Activated naive CD4-positive, alpha-beta T cell treated with anti-CD3 and anti-CD28 coated beads, Interleukin-2, amount 10 ng/mL, durations not matched to agents 7 days and 5 days (primary cell): ENCODE measurements at regions of chr10 and their contacts with region 1.

Region 1: GRCh38 chr10:62610649-62611229 is 193.8 kb upstream of the ADO start:
- DNase-seq: peak; percentile 79
- H3K4me3 Mint-ChIP-seq: no peak overlapping the region
- H3K27ac Mint-ChIP-seq: no peak overlapping the region
- H3K4me1 Mint-ChIP-seq: no peaks in the 10 kb centered on the region
- H3K27me3 Mint-ChIP-seq: peaks cover 15% of the 10 kb centered on the region

Region 2: DNA sequence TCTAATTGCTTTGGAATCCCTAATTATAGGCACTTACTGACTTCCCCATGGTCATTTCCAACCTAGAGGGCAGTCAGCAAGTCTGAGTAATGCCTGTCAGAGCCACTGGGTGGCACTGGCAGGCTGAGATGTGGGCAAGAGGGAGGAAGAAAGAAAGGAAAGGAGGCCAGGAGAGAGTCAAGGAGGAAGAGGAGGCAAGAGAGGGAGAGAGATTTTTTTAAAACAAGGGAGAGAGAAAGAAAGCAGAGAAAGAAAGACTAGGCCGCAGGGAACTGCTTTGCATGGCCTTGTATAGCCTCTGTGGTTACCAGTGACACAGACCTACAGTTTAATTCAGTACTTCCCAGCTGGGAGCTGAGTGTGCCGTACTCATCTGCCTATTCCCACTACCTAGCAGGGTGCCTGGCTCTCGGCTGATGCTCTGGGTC is 16.6 kb before region 1 on chr10:
- CTCF ChIA-PET with region 1: interaction called, 10 read pairs
- DNase-seq: peak; percentile 64
- H3K4me3 Mint-ChIP-seq: no peak overlapping the region
- H3K27ac Mint-ChIP-seq: no peak overlapping the region
- H3K4me1 Mint-ChIP-seq: no peaks in the 10 kb centered on the region
- H3K27me3 Mint-ChIP-seq: peaks cover 8% of the 10 kb centered on the region

Region 3: DNA sequence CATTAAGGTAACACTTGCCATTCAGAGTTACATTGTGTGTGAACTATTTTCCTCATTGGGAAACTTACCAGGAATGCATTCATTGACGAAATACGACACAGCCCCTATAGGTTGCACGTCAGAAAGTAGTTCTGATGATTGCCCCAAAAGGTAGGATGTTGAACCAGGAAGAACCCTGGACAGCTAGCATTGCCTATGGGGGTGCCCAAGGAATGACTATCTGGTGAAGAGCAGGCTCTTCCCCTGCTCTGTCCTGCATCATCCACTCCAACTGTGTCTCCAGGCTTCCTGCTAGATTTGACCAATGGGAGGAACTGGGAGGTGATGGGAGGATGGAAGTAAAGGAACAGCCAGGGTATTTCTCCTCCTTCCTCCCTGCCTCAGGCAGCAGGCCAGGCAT is 11.2 kb after region 1 on chr10:
- CTCF ChIA-PET with region 1: interaction called, 11 read pairs
- DNase-seq: no peak
- H3K4me3 Mint-ChIP-seq: no peak overlapping the region
- H3K27ac Mint-ChIP-seq: no peak overlapping the region
- H3K4me1 Mint-ChIP-seq: peaks cover 10% of the 10 kb centered on the region
- H3K27me3 Mint-ChIP-seq: peaks cover 22% of the 10 kb centered on the region

Region 4: DNA sequence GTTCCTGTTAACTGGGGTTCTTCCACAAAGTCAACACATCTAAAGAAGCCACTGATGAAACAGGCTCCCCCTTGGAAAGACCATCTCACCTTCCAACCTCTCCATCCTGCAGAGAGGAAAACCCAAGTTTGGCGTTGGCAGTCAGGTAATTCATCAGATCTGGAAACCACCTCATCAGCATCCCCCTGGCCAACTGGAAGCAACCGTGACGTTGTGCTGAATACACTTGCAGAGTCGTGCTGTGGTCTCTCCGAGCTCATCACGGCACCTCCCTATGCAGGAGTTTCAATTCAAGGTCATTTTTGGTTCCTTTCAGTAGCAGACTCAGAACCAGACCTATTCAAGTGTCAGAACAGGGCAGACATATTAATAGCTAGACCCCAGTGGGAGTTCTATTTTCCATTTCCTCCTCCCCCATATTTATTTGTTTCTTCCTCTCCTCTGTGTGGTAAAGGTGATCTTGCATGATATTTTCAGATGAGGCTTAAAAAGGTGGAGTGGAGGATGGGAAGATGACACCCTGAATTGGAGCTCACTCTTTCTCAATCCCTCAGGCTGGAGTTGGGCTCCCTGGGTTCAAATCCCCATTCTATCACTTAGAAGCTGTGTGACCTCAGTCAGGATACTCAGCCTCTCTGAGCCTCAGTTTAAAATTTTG is 44.7 kb after region 1 on chr10:
- CTCF ChIA-PET with region 1: no interaction called
- DNase-seq: no peak
- H3K4me3 Mint-ChIP-seq: no peak overlapping the region
- H3K27ac Mint-ChIP-seq: no peak overlapping the region
- H3K4me1 Mint-ChIP-seq: no peaks in the 10 kb centered on the region
- H3K27me3 Mint-ChIP-seq: peaks cover 8% of the 10 kb centered on the region

Region 5: DNA sequence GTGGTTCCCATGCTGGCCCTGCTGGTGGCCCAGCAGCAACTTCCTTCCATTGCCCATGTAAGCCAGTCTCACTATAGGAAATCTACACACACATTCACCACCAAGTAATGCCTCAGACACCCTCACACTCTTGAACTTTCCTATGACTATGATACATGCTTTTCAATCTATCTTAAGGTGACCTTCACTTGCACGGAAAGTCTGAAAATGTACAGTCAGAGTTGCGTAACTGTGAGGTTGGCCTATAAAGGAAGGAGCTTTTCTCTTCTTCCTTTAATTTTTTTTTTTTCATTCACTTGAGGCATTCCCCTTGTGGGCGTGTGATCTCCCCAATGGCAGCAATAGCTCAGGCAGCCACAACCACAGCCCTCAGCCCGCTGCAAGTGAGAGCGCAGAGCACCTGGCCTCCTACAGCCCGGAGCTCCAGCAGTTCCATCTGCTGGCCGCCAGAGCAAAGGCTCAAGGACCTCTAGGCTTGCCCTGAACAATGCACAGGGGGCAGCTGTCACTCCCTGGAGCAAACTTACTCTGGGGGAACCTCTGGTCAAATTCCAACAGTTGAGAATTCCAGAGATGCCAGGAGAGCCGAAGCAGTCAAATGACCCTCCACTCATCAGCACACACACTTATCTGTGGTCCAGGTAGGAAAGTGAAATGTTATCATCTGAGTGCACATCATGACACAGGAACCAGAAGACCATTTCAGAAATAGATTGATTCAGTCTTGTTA is 70.6 kb after region 1 on chr10:
- CTCF ChIA-PET with region 1: interaction called, 13 read pairs
- DNase-seq: peak; percentile 57
- H3K4me3 Mint-ChIP-seq: no peak overlapping the region
- H3K27ac Mint-ChIP-seq: no peak overlapping the region
- H3K4me1 Mint-ChIP-seq: peaks cover 15% of the 10 kb centered on the region
- H3K27me3 Mint-ChIP-seq: peaks cover 3% of the 10 kb centered on the region

Region 6: GRCh38 chr10:62816331-62817120 is 205.8 kb after region 1 on chr10 and contains the start of gene EGR2:
- CTCF ChIA-PET with region 1: interaction called, 88 read pairs
- DNase-seq: peak; percentile 96
- H3K4me3 Mint-ChIP-seq: peak within 1 kb of the TSS; percentile 88
- H3K27ac Mint-ChIP-seq: peak within 1 kb of the TSS; percentile 97
- H3K4me1 Mint-ChIP-seq: peaks cover 39% of the 10 kb centered on the region
- H3K27me3 Mint-ChIP-seq: peaks cover 86% of the 10 kb centered on the region

Region 7: GRCh38 chr10:63083904-63084689 is 473.4 kb after region 1 on chr10:
- CTCF ChIA-PET with region 1: interaction called, 29 read pairs
- DNase-seq: peak; percentile 40
- H3K4me3 Mint-ChIP-seq: no peak overlapping the region
- H3K27ac Mint-ChIP-seq: no peak overlapping the region
- H3K4me1 Mint-ChIP-seq: no peaks in the 10 kb centered on the region
- H3K27me3 Mint-ChIP-seq: peaks cover 13% of the 10 kb centered on the region

Region 8: DNA sequence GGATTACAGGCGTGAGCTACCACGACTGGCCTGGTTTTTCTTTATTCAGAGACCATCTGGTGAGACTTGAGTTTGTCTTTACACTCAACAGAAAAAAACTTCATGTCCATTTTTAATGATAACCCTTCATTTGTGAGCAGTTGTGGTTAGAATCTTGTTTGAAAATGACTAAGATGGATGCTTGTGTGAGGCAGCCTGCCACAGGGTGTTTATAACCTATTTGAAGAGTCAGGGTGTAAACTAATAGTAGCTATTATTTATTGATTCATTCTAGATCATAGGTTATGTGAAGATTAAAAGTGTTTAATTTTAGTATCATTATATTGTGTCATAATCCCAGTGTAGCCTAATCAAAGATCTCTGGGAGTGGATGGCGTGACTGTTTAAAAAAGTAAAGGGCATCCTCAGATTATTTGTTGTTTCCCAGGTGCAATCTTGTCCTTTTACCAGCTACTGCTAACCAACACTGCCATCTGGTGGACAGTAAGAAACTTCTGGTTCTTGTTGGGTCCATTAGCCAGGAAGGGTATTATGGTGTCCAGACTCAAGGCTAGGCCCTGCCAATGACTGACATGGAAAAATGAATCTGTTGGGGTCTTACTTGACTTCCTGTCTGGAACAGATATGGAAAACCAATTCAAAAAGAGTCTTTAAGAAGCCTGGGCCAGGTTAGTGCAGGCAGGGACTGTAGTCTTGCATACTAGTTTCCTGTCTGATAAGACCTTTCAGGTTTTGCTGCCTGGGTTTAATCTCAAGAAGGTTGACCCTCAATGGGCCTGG is 547.3 kb after region 1 on chr10:
- CTCF ChIA-PET with region 1: interaction called, 16 read pairs
- DNase-seq: peak; percentile 54
- H3K4me3 Mint-ChIP-seq: no peak overlapping the region
- H3K27ac Mint-ChIP-seq: no peak overlapping the region
- H3K4me1 Mint-ChIP-seq: peaks cover 5% of the 10 kb centered on the region
- H3K27me3 Mint-ChIP-seq: no peaks in the 10 kb centered on the region